ENCODE measurements at regions of chr6 and their contacts with region 1.

Region 1: DNA sequence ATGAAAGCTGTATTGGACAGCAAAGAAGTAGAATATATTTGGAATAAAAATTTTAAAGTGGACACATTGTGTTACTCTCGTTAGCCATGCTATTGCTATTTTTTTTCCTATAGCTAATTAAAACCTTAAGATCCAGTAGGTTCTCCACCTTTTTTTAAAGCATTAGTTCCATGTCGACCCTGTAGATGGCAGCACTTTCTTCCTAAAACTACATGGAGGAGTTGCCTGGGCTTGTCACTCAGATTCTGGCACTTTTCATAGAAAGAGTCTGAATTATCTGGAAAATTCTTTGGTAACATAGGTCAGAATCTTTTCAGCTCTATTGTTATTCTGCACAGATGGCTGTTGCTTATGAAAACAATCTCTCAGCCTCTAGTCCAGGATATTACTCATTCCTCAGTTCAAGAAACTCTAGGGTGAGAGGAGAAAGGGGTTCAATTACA is 42.0 kb upstream of the ESR1 start:
- DNase-seq: no peak
- ATAC-seq: peak; percentile 40 to 45

Region 2: GRCh38 chr6:152124429-152125074 is 359.1 kb after region 1 on chr6:
- intact Hi-C with region 1: loop called in 1 of 2 experiments (anchors 5 kb)
- DNase-seq: no peak
- ATAC-seq: peak; percentile 46 to 49

Region 3: GRCh38 chr6:152267967-152268845 is 502.7 kb after region 1 on chr6:
- intact Hi-C with region 1: loop called (anchors 10 kb)
- DNase-seq: no peak
- ATAC-seq: no peak

Measured in left cardiac atrium (tissue), 4 donors.